ENCODE measurements at regions of chr13 and their contacts with region 1.

Region 1: GRCh38 chr13:21603531-21604448 is at the start of gene MICU2:
- DNase-seq: peak; percentile 97
- ATAC-seq: peak; percentile 96
- H3K4me3 Mint-ChIP-seq: peak within 1 kb of the TSS; percentile 85
- H3K27ac Mint-ChIP-seq: peak within 1 kb of the TSS; percentile 94
- H3K4me1 Mint-ChIP-seq: peaks cover 35% of the 10 kb centered on the region
- H3K27me3 Mint-ChIP-seq: peaks cover 1% of the 10 kb centered on the region
- total RNA-seq, gene MICU2: 28.4 to 28.7 TPM

Region 2: DNA sequence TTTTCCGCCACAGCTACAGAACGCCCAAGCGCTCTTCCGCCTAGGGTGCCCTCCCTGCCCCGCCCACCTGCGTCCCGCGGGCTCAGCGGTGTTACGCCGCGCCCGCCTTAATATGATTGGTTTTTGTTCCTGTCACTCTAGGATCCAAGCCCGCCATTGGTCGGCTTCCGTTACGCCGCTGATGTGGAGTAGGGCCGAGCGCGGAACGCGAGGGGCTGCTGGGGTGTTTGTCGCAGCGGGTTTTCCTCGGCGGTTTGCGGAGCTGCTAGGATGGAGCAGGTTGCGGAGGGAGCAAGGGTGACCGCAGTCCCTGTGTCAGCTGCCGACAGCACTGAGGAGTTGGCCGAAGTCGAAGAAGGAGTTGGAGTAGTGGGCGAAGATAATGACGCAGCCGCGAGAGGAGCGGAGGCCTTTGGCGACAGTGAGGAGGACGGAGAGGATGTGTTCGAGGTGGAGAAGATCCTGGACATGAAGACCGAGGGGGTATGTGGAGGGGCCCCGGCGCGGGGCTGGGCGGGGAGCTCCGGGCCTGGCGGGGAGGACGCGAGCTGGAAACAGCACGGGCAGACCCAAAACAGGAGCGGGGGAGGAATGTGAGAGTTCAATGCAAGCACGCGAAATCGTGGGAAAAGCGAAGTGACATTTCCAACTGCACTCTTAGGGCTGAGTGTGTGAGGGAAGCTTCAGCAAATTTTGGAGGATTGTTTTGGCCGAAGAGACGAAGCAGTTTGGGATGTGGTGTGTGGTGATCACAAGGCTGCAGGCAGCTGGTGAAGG is 1970.1 kb before region 1 on chr13 and contains the start of gene MPHOSPH8:
- CTCF ChIA-PET with region 1: no interaction called
- POLR2A ChIA-PET with region 1: no interaction called
- intact Hi-C with region 1: loop called in 1 of 2 experiments (anchors 5 kb)
- DNase-seq: peak; percentile 96
- ATAC-seq: peak; percentile 98
- H3K4me3 Mint-ChIP-seq: peak within 1 kb of the TSS; percentile 99
- H3K27ac Mint-ChIP-seq: peak within 1 kb of the TSS; percentile 99
- H3K4me1 Mint-ChIP-seq: peaks cover 27% of the 10 kb centered on the region
- H3K27me3 Mint-ChIP-seq: no peaks in the 10 kb centered on the region
- total RNA-seq, gene MPHOSPH8: 39.1 to 39.8 TPM

Region 3: GRCh38 chr13:20902438-20903163 is 701.2 kb before region 1 on chr13 and contains the start of gene XPO4:
- CTCF ChIA-PET with region 1: no interaction called
- POLR2A ChIA-PET with region 1: no interaction called
- intact Hi-C with region 1: loop called in 1 of 2 experiments (anchors 2 kb)
- DNase-seq: peak; percentile 91
- ATAC-seq: peak; percentile 94
- H3K4me3 Mint-ChIP-seq: peak within 1 kb of the TSS; percentile 91
- H3K27ac Mint-ChIP-seq: peak within 1 kb of the TSS; percentile 92
- H3K4me1 Mint-ChIP-seq: peaks cover 32% of the 10 kb centered on the region
- H3K27me3 Mint-ChIP-seq: no peaks in the 10 kb centered on the region
- total RNA-seq, gene XPO4: 22.8 to 26.4 TPM

Region 4: DNA sequence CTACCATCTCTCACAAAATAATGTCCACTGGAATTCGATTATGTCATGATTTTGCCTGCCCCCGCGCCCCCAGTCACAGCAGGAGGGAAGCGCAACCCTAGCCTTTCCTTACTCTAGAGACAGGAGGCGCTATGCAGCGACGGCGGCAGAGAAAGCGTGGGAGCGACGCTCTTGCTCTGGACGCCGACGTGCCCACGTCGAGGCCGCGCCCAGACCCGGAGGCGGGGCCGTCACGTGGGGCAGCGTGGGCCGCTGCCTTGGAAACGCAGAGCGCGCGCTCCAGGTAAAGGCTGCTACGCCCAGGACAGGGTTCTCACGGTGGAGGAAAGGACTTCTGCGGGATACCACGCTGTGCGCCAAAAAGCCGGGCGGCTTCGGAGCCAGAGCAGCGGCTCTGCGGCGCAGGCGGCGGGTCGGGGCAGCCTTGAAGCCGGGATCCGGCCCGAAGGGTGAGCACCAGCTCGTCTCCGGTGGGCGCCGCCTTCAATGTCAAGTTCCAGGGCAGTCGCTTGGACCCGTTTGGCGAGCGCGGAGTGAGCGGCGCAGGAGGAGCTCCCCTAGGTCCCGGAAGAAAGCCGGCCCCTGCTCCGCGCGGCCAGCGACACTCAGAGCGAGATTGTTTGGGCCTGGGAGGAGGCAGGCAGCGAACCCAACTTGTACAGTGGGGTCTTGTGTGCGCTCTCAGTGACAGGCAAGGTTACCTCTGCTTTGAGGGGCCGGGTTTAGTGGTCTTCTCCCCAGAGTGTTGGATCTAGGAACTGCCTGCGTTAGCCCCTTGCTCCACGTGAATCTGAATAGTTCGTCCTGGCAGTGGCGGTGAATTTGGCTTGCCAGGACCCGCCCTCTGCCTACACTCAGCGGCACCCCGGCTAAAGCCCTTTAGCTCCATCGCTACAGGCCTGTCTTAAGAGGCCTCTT is 305.6 kb before region 1 on chr13:
- CTCF ChIA-PET with region 1: interaction called, 4 read pairs
- POLR2A ChIA-PET with region 1: interaction called, 3 read pairs
- intact Hi-C with region 1: loop called (anchors 1 to 5 kb)
- DNase-seq: peak; percentile 93
- ATAC-seq: peak; percentile 93
- H3K4me3 Mint-ChIP-seq: peak overlapping the region; percentile 84
- H3K27ac Mint-ChIP-seq: peak overlapping the region; percentile 82
- H3K4me1 Mint-ChIP-seq: peaks cover 25% of the 10 kb centered on the region
- H3K27me3 Mint-ChIP-seq: no peaks in the 10 kb centered on the region

Region 5: DNA sequence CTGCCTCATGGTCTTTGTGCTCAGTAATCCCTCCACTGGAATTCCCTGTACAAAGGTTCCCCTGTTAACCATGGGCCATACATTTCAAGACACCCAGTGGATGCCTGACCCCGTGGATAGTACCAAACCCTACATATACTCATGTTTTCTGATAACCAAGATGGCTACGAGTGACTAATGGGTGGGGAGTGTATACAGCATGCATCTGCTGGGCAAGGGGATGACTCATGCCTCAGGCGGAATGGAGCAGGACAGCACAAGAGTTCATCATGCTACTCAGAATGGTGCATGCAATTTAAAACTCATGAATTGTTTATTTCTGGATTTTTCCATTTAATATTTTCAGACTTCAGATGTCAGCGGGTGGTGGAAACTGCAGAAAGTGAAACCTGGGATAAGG is 53.7 kb after region 1 on chr13:
- CTCF ChIA-PET with region 1: no interaction called
- POLR2A ChIA-PET with region 1: no interaction called
- intact Hi-C with region 1: no loop called
- DNase-seq: no peak
- ATAC-seq: peak; percentile 51
- H3K4me3 Mint-ChIP-seq: no peak overlapping the region
- H3K27ac Mint-ChIP-seq: no peak overlapping the region
- H3K4me1 Mint-ChIP-seq: no peaks in the 10 kb centered on the region
- H3K27me3 Mint-ChIP-seq: peaks cover 30% of the 10 kb centered on the region

Region 6: GRCh38 chr13:21670883-21671619 is 67.3 kb after region 1 on chr13 and contains the start of gene FGF9:
- CTCF ChIA-PET with region 1: no interaction called
- POLR2A ChIA-PET with region 1: no interaction called
- intact Hi-C with region 1: loop called (anchors 1 kb)
- DNase-seq: peak; percentile 88
- ATAC-seq: peak; percentile 78
- H3K4me3 Mint-ChIP-seq: peak within 1 kb of the TSS; percentile 76
- H3K27ac Mint-ChIP-seq: peak within 1 kb of the TSS; percentile 53
- H3K4me1 Mint-ChIP-seq: peaks cover 45% of the 10 kb centered on the region
- H3K27me3 Mint-ChIP-seq: peaks cover 43% of the 10 kb centered on the region
- total RNA-seq, gene FGF9: 0.19 TPM in 1 of 2 experiments, not detected in the other